Activated CD8-positive, alpha-beta memory T cell treated with anti-CD3 and anti-CD28 coated beads, Interleukin-2, amount 10 ng/mL, durations not matched to agents 7 days and 5 days (primary cell): ENCODE measurements at regions of chr17 and their contacts with region 1.

Region 1: DNA sequence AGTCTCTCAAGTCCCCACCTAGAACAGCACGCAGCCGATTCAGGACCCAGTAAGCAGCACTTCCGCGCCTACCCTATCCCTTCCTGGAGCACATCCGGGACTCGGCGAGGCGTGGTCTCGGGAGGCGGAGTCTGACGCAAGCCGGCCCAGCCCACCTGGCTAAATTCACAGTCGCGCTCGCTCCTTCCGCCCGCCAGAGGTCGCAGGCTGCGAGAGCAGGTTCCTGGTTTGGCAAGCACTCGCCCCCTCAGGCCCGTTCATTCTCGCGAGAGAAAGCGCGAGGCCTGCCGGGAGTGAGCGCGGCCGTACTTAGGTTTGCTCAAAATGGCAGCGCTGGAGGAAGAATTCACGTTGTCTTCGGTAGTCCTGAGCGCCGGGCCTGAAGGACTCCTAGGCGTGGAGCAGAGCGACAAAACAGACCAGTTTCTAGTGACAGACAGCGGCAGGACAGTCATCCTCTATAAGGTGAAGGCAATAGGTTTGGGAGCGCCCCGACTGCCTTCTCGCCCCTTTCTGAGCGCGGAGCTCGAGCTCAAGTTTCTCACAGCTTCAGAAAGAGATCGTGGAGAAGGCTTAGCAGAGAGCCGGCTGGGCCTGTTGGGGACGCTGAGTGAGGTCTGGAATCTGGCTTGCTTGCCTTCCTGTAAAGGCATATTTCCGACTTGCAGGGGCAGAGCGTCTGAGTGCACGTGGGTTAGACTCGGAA is at the start of gene NOL11:
- DNase-seq: peak; percentile 100
- ATAC-seq: peak; percentile 98
- H3K4me3 Mint-ChIP-seq: peak within 1 kb of the TSS; percentile 94
- H3K27ac Mint-ChIP-seq: peak within 1 kb of the TSS; percentile 95
- H3K4me1 Mint-ChIP-seq: peaks cover 32% of the 10 kb centered on the region
- H3K27me3 Mint-ChIP-seq: no peaks in the 10 kb centered on the region
- total RNA-seq, gene NOL11: 46.8 to 64.7 TPM

Region 2: GRCh38 chr17:67707442-67707841 is 10.3 kb before region 1 on chr17:
- CTCF ChIA-PET with region 1: interaction called, 10 read pairs
- DNase-seq: no peak
- ATAC-seq: no peak
- H3K4me3 Mint-ChIP-seq: no peak overlapping the region
- H3K27ac Mint-ChIP-seq: no peak overlapping the region
- H3K4me1 Mint-ChIP-seq: no peaks in the 10 kb centered on the region
- H3K27me3 Mint-ChIP-seq: peaks cover 5% of the 10 kb centered on the region

Region 3: DNA sequence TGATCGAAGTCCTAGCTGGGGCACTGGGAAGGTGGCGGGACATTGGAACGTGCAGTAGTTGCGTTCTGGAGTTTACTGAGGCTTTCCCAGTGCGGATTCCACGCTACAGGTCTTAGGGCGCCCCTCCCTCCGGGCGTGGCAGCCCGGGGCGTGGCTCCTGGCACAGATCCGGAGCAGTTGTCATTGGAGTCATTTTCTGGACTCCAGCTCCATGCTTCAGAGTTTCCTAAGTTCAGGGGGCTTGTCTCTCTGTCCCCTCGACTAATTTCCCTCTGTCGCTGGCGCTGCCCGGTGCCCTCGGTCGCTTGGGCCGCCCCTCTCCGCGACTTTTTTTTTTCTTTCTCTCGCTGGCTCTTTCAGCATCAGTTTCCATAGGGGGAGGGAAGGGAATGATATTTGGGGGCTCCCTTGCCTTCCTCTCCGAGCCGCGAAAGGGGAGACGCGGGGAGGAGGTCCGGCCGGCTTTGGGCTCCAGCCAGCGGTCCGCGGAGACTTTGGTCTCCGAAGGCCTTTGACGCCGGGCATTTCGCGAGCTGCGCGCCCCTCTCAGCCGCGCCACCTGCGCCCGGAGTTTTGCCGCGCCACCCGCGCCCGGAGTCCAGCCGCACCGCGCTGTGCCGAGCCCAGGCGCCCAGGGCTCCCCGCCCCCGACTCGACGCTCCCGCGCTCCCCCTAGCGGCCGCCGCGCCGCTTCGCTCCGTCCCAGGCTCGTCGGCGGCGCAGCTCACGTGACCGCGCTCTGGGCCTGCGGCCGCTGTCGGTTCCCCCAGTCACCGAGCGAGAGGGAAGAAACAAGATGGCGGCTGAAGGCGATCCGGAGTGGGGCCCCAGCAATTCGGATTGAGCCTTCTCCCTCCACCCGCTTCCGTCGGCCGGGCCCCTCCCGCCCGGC is 107.2 kb after region 1 on chr17 and contains the start of gene BPTF:
- CTCF ChIA-PET with region 1: interaction called, 13 read pairs
- DNase-seq: peak; percentile 94
- ATAC-seq: peak; percentile 87
- H3K4me3 Mint-ChIP-seq: peak within 1 kb of the TSS; percentile 96
- H3K27ac Mint-ChIP-seq: peak within 1 kb of the TSS; percentile 97
- H3K4me1 Mint-ChIP-seq: peaks cover 25% of the 10 kb centered on the region
- H3K27me3 Mint-ChIP-seq: peaks cover 16% of the 10 kb centered on the region
- total RNA-seq, gene BPTF: 89.3 to 101 TPM